ENCODE measurements at regions of chr6 and their contacts with region 1.

Region 1: GRCh38 chr6:80004173-80005072 is at the start of gene TTK:
- DNase-seq: peak; percentile 94
- ATAC-seq: peak; percentile 99
- H3K4me3 Mint-ChIP-seq: peak within 1 kb of the TSS; percentile 87
- H3K27ac Mint-ChIP-seq: peak within 1 kb of the TSS; percentile 95
- H3K4me1 Mint-ChIP-seq: peaks cover 13% of the 10 kb centered on the region
- H3K27me3 Mint-ChIP-seq: no peaks in the 10 kb centered on the region
- total RNA-seq, gene TTK: 39.1 to 47.2 TPM

Region 2: GRCh38 chr6:79233611-79234149 is 770.7 kb before region 1 on chr6:
- CTCF ChIA-PET with region 1: no interaction called
- POLR2A ChIA-PET with region 1: no interaction called
- intact Hi-C with region 1: loop called in 1 of 2 experiments (anchors 10 kb)
- DNase-seq: peak; percentile 83
- ATAC-seq: peak; percentile 68
- H3K4me3 Mint-ChIP-seq: peak overlapping the region; percentile 98
- H3K27ac Mint-ChIP-seq: peak overlapping the region; percentile 92
- H3K4me1 Mint-ChIP-seq: peaks cover 16% of the 10 kb centered on the region
- H3K27me3 Mint-ChIP-seq: peaks cover 2% of the 10 kb centered on the region

Region 3: DNA sequence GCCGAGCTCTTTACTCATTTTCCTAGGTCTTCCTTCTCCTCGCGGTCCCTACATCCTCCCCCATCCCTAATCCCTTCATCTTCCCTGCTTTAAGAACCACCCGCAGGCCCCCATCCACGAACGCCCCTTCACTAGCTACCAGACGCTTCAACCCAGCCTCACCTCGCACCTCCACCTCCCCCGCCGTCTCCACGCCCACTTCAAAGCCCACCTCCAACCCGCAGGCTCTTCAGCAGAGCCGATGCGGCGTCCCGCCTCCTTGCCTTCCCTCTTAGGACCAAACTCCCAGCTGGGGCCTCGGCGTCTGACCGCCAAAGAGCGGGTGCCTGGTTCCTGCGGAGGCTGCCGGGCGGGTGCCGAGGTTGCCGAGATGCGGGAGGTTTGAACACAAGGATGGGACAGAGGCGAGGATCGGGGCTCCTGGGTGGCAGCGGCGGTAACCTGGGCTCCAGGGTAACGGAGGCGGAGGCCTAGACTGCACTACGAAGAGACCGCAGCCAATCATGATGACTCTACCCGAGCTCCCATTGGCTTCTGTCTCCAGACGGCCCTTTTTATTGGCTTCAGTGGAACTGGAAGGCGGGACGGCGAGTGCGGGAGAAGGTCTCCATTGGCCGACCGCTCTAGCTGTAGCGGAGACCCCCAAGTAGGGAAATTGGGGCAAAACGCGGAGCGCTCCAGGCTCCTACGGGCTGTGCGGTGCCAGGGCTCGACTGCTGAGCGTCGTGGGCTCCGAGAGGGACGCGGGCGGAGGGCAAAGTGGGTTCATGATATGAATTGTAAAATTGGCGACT is 467.3 kb before region 1 on chr6 and contains the start of gene LCA5:
- CTCF ChIA-PET with region 1: no interaction called
- POLR2A ChIA-PET with region 1: no interaction called
- intact Hi-C with region 1: loop called (anchors 1 to 10 kb)
- DNase-seq: peak; percentile 90
- ATAC-seq: peak; percentile 100
- H3K4me3 Mint-ChIP-seq: no peak within 1 kb of the TSS
- H3K27ac Mint-ChIP-seq: no peak within 1 kb of the TSS
- H3K4me1 Mint-ChIP-seq: no peaks in the 10 kb centered on the region
- H3K27me3 Mint-ChIP-seq: peaks cover 8% of the 10 kb centered on the region
- total RNA-seq, gene LCA5: 0.25 to 0.32 TPM

Region 4: DNA sequence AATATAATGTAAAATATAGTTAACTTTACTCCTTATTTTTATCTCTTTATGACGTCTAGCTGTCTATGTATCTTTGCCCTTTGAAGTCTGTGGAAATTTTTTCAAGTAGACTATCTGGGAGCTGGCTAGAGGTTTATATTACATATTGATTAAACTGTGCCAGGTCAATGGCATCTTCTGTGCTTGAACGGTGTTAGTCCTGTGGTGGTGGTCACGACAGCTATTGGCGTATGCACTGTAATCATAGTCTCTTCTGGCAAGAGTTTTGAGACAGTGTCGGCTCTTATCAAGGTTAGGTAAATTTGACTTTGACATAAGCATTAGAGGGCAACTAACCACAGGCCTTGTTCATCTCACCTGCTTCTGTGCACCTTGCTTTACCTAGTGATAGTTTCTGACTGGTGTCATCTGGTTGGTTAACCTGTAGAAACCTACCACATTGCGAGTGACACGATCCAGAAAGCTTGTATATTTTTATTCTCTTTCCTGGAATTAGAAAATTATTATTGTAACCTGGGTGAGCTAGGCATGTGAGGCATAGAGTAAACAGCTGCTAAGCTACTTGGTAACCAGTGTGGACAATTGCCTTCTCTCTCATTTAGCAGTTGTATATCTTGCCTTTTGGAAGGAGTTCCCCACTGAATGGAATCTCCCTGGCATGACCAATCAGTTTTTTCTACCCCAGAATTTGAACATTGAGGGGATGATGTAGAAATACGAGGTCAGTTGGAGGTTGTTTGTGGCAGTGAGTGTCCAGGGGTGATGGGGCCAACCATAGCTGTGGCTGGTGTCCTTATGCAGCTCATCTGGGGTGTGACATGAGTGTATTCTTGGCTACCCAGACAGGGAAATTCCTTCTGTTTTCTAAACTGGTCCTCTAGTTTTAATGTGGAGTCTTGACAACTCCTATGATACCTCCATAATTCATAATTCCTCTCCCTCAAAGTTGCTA is 327.4 kb before region 1 on chr6:
- CTCF ChIA-PET with region 1: no interaction called
- POLR2A ChIA-PET with region 1: no interaction called
- intact Hi-C with region 1: no loop called
- DNase-seq: no peak
- ATAC-seq: no peak
- H3K4me3 Mint-ChIP-seq: no peak overlapping the region
- H3K27ac Mint-ChIP-seq: no peak overlapping the region
- H3K4me1 Mint-ChIP-seq: peaks cover 9% of the 10 kb centered on the region
- H3K27me3 Mint-ChIP-seq: no peaks in the 10 kb centered on the region

Region 5: GRCh38 chr6:79777713-79778579 is 226.5 kb before region 1 on chr6:
- CTCF ChIA-PET with region 1: no interaction called
- POLR2A ChIA-PET with region 1: no interaction called
- intact Hi-C with region 1: loop called in 1 of 2 experiments (anchors 1 kb)
- DNase-seq: peak; percentile 93
- ATAC-seq: peak; percentile 88
- H3K4me3 Mint-ChIP-seq: peak overlapping the region; percentile 63
- H3K27ac Mint-ChIP-seq: peak overlapping the region; percentile 62
- H3K4me1 Mint-ChIP-seq: peaks cover 7% of the 10 kb centered on the region
- H3K27me3 Mint-ChIP-seq: peaks cover 4% of the 10 kb centered on the region

Region 6: GRCh38 chr6:79949233-79949632 is 55.2 kb before region 1 on chr6:
- CTCF ChIA-PET with region 1: interaction called, 18 read pairs
- POLR2A ChIA-PET with region 1: no interaction called
- intact Hi-C with region 1: loop called (anchors 1 kb)
- DNase-seq: peak; percentile 83
- ATAC-seq: peak; percentile 33
- H3K4me3 Mint-ChIP-seq: no peak overlapping the region
- H3K27ac Mint-ChIP-seq: no peak overlapping the region
- H3K4me1 Mint-ChIP-seq: peaks cover 29% of the 10 kb centered on the region
- H3K27me3 Mint-ChIP-seq: peaks cover 22% of the 10 kb centered on the region

Region 7: GRCh38 chr6:80028591-80028990 is 24.2 kb after region 1 on chr6:
- CTCF ChIA-PET with region 1: no interaction called
- POLR2A ChIA-PET with region 1: no interaction called
- intact Hi-C with region 1: no loop called
- DNase-seq: no peak
- ATAC-seq: no peak
- H3K4me3 Mint-ChIP-seq: no peak overlapping the region
- H3K27ac Mint-ChIP-seq: no peak overlapping the region
- H3K4me1 Mint-ChIP-seq: peaks cover 4% of the 10 kb centered on the region
- H3K27me3 Mint-ChIP-seq: no peaks in the 10 kb centered on the region

Region 8: DNA sequence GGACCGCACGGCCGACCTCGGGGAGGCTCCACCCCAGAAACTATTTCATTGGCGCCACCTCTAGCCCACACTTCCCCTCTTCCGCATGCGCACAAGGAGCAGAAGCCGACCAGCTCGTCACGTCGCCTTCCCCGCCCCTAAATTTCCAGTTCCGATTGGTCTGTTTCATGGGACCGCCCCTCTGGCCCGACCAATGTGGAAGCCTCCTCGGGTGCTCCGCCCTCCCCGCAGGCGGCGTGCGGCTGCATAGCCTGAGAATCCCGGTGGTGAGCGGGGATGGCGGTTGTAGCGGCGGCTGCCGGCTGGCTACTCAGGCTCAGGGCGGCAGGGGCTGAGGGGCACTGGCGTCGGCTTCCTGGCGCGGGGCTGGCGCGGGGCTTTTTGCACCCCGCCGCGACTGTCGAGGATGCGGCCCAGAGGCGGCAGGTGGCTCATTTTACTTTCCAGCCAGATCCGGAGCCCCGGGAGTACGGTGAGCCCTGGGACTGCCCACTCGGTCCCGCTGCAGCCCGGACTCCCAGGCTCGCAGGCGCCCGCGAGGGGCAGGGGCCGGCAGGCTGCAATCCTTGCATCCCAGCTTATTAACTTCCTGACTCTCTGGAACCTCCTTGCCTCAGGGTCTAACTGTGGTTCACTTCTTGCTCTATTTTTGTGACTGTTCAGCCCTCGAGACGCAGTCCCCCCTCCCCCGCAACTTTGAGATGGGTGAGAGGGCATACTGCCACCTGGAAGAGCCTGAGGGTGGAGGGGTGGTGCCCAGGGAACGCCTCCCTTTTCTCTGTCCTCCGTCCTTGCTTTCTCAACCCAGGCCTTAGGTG is 102.2 kb after region 1 on chr6 and contains the start of gene BCKDHB:
- CTCF ChIA-PET with region 1: no interaction called
- POLR2A ChIA-PET with region 1: interaction called, 11 read pairs
- intact Hi-C with region 1: loop called (anchors 1 kb)
- DNase-seq: peak; percentile 98
- ATAC-seq: peak; percentile 98
- H3K4me3 Mint-ChIP-seq: peak within 1 kb of the TSS; percentile 90
- H3K27ac Mint-ChIP-seq: peak within 1 kb of the TSS; percentile 88
- H3K4me1 Mint-ChIP-seq: peaks cover 12% of the 10 kb centered on the region
- H3K27me3 Mint-ChIP-seq: peaks cover 6% of the 10 kb centered on the region
- total RNA-seq, gene BCKDHB: 13.1 to 21.4 TPM

Region 9: GRCh38 chr6:80163658-80164187 is 159.3 kb after region 1 on chr6:
- CTCF ChIA-PET with region 1: no interaction called
- POLR2A ChIA-PET with region 1: no interaction called
- intact Hi-C with region 1: loop called in 1 of 2 experiments (anchors 5 kb)
- DNase-seq: peak; percentile 13
- ATAC-seq: peak; percentile 80
- H3K4me3 Mint-ChIP-seq: no peak overlapping the region
- H3K27ac Mint-ChIP-seq: no peak overlapping the region
- H3K4me1 Mint-ChIP-seq: peaks cover 2% of the 10 kb centered on the region
- H3K27me3 Mint-ChIP-seq: no peaks in the 10 kb centered on the region